MCF 10A (cell line): ENCODE measurements at regions of chr7 and their contacts with region 1.

Region 1: DNA sequence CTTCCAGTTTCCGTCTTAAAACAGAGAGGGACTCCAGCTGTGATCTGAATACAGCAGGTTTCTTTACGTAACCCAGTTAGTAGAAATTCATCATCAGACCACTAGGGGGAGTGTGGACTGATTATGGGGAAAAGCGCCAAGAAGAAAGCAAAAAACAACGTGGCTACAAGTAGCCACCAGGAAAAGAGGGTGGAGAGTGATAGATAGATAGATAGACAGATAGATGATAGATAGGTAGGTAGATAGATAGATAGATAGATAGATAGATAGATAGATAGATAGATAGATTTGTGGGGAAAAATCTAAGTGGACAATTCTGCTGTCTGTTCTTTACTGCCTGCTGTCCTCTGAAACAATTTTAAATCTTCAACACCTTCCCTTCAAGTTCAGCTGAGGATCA is 12.7 kb upstream of the AKR1B10 start:
- DNase-seq: peak; percentile 87
- H3K4me3 Mint-ChIP-seq: no peak overlapping the region
- H3K27ac Mint-ChIP-seq: no peak overlapping the region
- H3K4me1 Mint-ChIP-seq: peaks cover 29% of the 10 kb centered on the region
- H3K27me3 Mint-ChIP-seq: no peaks in the 10 kb centered on the region
- CTCF ChIP-seq: peak; percentile 77

Region 2: GRCh38 chr7:134307320-134307719 is 207.3 kb before region 1 on chr7:
- CTCF ChIA-PET with region 1: no interaction called
- POLR2A ChIA-PET with region 1: no interaction called
- intact Hi-C with region 1: no loop called
- DNase-seq: no peak
- H3K4me3 Mint-ChIP-seq: no peak overlapping the region
- H3K27ac Mint-ChIP-seq: no peak overlapping the region
- H3K4me1 Mint-ChIP-seq: no peaks in the 10 kb centered on the region
- H3K27me3 Mint-ChIP-seq: no peaks in the 10 kb centered on the region
- CTCF ChIP-seq: no peak

Region 3: GRCh38 chr7:134458806-134459698 is 55.6 kb before region 1 on chr7 and contains the start of gene AKR1B1:
- CTCF ChIA-PET with region 1: interaction called, 23 read pairs
- POLR2A ChIA-PET with region 1: interaction called, 3 read pairs
- intact Hi-C with region 1: no loop called
- DNase-seq: peak; percentile 86
- H3K4me3 Mint-ChIP-seq: peak within 1 kb of the TSS; percentile 76
- H3K27ac Mint-ChIP-seq: peak within 1 kb of the TSS; percentile 61
- H3K4me1 Mint-ChIP-seq: peaks cover 29% of the 10 kb centered on the region
- H3K27me3 Mint-ChIP-seq: no peaks in the 10 kb centered on the region
- CTCF ChIP-seq: peak; percentile 18
- total RNA-seq, gene AKR1B1: 115 and 128 TPM in 2 replicates

Region 4: DNA sequence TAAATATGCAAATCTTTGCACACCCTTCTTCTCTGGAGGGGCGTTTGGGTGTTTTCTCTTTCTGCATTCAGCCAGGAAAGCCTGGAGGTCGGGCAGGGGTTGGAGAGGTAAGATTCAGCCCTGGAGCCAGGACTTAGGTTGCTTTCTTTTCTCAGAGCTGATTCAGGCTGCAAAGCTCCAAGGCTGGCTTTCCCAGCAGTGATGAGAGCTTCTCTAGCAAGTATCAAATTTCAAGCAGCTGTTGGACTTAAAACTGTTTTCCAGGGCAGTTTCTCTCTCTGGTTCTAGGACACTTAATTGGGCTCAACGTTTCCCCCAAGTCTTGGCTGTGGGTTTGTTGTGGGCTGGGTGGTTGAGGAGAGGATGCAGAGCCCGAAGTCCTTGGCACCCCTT is 13.3 kb after region 1 on chr7:
- CTCF ChIA-PET with region 1: interaction called, 10 read pairs
- POLR2A ChIA-PET with region 1: interaction called, 11 read pairs
- intact Hi-C with region 1: no loop called
- DNase-seq: peak; percentile 66
- H3K4me3 Mint-ChIP-seq: no peak overlapping the region
- H3K27ac Mint-ChIP-seq: no peak overlapping the region
- H3K4me1 Mint-ChIP-seq: peaks cover 39% of the 10 kb centered on the region
- H3K27me3 Mint-ChIP-seq: no peaks in the 10 kb centered on the region
- CTCF ChIP-seq: no peak

Region 5: DNA sequence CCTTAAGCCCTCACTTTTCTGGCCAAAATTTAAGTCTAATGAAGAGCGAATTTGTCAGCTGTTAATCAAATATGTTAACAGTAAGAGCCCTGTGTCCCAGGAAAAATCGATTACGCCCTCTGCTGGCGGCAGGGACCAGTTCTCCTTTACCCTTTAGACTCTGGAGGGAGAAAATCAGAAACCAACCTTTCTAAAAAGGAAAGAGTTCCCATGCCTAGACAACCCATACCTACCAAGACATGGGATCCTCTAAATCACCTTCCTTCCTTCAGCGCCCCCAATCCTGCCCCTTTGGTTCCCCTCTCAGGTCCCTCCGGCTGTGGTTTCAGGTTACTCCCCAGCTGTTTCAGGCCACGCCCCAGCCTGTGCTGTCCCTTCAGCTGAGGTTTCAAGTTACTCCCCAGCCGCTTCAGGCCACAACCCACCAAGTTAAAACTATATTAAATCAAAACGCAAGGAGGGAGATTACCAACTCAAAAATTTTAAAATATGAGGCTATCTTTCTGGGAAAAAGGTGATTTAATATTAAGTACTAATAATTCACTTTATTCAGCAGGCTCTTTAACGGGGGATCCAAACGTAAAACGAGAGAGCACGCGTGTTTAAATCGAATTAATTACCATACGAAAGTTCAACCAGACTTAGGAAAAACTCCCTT is 32.9 kb after region 1 on chr7:
- CTCF ChIA-PET with region 1: interaction called, 71 read pairs
- POLR2A ChIA-PET with region 1: interaction called, 17 read pairs
- intact Hi-C with region 1: loop called (anchors 2 kb)
- DNase-seq: peak; percentile 83
- H3K4me3 Mint-ChIP-seq: peak overlapping the region; percentile 68
- H3K27ac Mint-ChIP-seq: peak overlapping the region; percentile 68
- H3K4me1 Mint-ChIP-seq: peaks cover 26% of the 10 kb centered on the region
- H3K27me3 Mint-ChIP-seq: no peaks in the 10 kb centered on the region
- CTCF ChIP-seq: peak; percentile 74

Region 6: DNA sequence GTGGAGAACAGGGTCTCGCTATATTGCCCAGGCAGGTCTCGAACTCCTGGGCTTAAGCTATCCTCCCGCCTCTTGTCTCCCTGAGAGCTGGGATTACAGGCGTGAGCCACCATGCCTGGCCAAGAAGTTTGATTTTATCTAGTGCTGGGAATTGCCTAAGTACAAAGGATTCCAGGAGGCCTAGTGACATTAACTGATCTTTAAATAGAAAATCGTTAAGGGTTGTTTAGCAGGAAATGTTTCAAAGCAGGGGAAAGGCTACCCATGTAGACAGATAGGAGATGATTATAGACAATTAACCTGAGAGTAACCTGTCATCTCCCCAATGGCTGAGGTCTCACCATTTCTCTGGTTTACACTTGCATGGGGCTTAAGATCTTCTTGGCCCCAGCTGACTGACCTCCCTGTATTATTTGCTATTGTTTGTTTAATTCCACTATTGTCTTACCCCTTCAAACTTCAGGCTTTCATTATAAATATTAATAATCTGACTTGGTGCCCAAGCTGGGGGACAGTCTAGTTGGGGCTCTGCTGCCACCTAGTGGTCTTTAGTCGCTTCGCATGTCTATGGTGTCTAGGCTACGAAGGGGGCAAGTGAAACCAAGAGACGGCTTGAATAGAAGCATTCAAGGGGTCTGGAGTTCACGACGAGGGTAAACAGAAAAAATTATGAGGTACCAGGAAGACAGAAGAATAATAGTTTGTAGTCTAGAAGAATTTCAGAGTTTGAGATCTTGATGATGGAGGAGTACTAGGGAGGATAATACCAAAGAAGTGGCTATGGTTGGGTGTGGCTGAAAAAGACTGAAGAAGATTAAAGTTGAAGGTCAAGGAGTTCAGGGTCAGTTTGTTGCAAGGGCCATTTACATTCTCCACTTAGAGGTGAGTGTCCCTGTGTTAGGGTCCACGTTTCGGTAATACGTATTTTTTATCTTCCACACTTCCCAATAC is 91.6 kb after region 1 on chr7:
- CTCF ChIA-PET with region 1: interaction called, 146 read pairs
- POLR2A ChIA-PET with region 1: interaction called, 5 read pairs
- intact Hi-C with region 1: loop called (anchors 1 kb)
- DNase-seq: peak; percentile 73
- H3K4me3 Mint-ChIP-seq: peak overlapping the region; percentile 21
- H3K27ac Mint-ChIP-seq: peak overlapping the region; percentile 65
- H3K4me1 Mint-ChIP-seq: peaks cover 6% of the 10 kb centered on the region
- H3K27me3 Mint-ChIP-seq: no peaks in the 10 kb centered on the region
- CTCF ChIP-seq: peak; percentile 90

Region 7: GRCh38 chr7:134720091-134720935 is 205.7 kb after region 1 on chr7:
- CTCF ChIA-PET with region 1: no interaction called
- POLR2A ChIA-PET with region 1: no interaction called
- intact Hi-C with region 1: no loop called
- DNase-seq: no peak
- H3K4me3 Mint-ChIP-seq: no peak overlapping the region
- H3K27ac Mint-ChIP-seq: no peak overlapping the region
- H3K4me1 Mint-ChIP-seq: no peaks in the 10 kb centered on the region
- H3K27me3 Mint-ChIP-seq: no peaks in the 10 kb centered on the region
- CTCF ChIP-seq: no peak